GM12878 (cell line): ENCODE measurements at regions of chr6 and their contacts with region 1.

Region 1: GRCh38 chr6:8219352-8219943 is 117.1 kb upstream of the EEF1E1 start:
- DNase-seq: no peak
- ATAC-seq: peak; percentile 84
- H3K4me3 ChIP-seq: no peak overlapping the region
- H3K27ac ChIP-seq: no peak overlapping the region
- H3K4me1 ChIP-seq: no peaks in the 10 kb centered on the region
- H3K27me3 ChIP-seq: no peaks in the 10 kb centered on the region; a peak in 2 of 4 replicates
- CTCF ChIP-seq: peak; percentile 63 to 76 (median 70)
- EP300 ChIP-seq: no peak
- POLR2A ChIP-seq: no peak
- RAD21 ChIP-seq: peak; percentile 85

Region 2: GRCh38 chr6:8063761-8064637 is 155.4 kb before region 1 on chr6 and contains the start of gene BLOC1S5:
- CTCF ChIA-PET with region 1: interaction called, 20 read pairs
- POLR2A ChIA-PET with region 1: no interaction called
- RAD21 ChIA-PET with region 1: interaction called, 10 read pairs
- SMC1A ChIA-PET with region 1: interaction called, 14 read pairs
- in situ Hi-C with region 1: no loop called
- intact Hi-C with region 1: loop called (anchors 2 kb)
- DNase-seq: peak; percentile 85
- ATAC-seq: peak; percentile 96
- H3K4me3 ChIP-seq: peak within 1 kb of the TSS; percentile 84
- H3K27ac ChIP-seq: peak within 1 kb of the TSS; percentile 91
- H3K4me1 ChIP-seq: peaks cover 20% of the 10 kb centered on the region
- H3K27me3 ChIP-seq: no peaks in the 10 kb centered on the region
- CTCF ChIP-seq: peak in 1 of 3 experiments; percentile 6; a peak in 1 of 6 replicates
- EP300 ChIP-seq: no peak
- POLR2A ChIP-seq: peak; percentile 91
- RAD21 ChIP-seq: no peak
- polyA plus RNA-seq, gene BLOC1S5: 4.3 to 5.9 TPM

Region 3: DNA sequence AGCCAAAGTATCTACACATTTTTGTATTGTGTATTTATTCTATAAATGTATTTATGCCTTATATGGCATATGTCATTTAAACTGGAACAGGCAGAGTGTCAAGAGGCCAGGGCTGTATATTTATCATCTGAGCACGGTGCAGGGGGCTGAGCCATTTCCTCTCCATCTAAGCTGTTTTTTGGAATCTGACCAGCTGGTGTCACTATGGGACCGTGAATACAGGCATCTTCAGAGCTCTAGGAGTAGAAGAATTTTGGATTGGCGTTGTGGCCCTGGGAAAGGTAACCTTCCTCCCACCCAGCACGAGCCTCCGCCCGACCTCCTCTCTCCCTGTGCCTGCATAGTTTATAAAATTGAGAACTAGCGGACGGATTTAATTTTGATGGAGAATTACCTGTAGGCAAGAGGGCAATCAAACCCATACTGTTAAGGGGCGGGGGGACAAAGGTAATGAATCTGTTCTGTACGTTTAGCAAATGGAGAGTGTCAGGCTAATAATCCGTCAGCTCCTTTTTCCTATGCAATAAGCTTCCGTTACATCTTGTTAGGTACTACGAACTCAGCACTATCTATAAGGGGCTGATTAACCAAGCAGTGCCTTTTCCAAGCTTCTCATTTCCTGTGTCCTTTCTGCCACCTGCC is 88.1 kb before region 1 on chr6:
- CTCF ChIA-PET with region 1: interaction called, 335 read pairs
- POLR2A ChIA-PET with region 1: interaction called, 3 read pairs
- RAD21 ChIA-PET with region 1: interaction called, 203 read pairs
- SMC1A ChIA-PET with region 1: interaction called, 147 read pairs
- in situ Hi-C with region 1: loop called (anchors 5 kb)
- intact Hi-C with region 1: loop called (anchors 1 kb)
- DNase-seq: no peak
- ATAC-seq: peak; percentile 91
- H3K4me3 ChIP-seq: no peak overlapping the region
- H3K27ac ChIP-seq: no peak overlapping the region
- H3K4me1 ChIP-seq: no peaks in the 10 kb centered on the region
- H3K27me3 ChIP-seq: peaks cover 0 to 5% of the 10 kb centered on the region in 2 experiments; a peak in 2 of 4 replicates
- CTCF ChIP-seq: peak; percentile 35 to 76 (median 41); a peak in 4 of 6 replicates
- EP300 ChIP-seq: no peak
- POLR2A ChIP-seq: no peak
- RAD21 ChIP-seq: peak; percentile 79

Region 4: GRCh38 chr6:8172530-8172929 is 46.9 kb before region 1 on chr6:
- CTCF ChIA-PET with region 1: interaction called, 17 read pairs
- POLR2A ChIA-PET with region 1: no interaction called
- RAD21 ChIA-PET with region 1: interaction called, 13 read pairs
- SMC1A ChIA-PET with region 1: interaction called, 5 read pairs
- in situ Hi-C with region 1: no loop called
- intact Hi-C with region 1: no loop called
- DNase-seq: no peak
- ATAC-seq: no peak
- H3K4me3 ChIP-seq: no peak overlapping the region
- H3K27ac ChIP-seq: no peak overlapping the region
- H3K4me1 ChIP-seq: no peaks in the 10 kb centered on the region
- H3K27me3 ChIP-seq: no peaks in the 10 kb centered on the region
- CTCF ChIP-seq: no peak
- EP300 ChIP-seq: no peak
- POLR2A ChIP-seq: no peak
- RAD21 ChIP-seq: no peak

Region 5: DNA sequence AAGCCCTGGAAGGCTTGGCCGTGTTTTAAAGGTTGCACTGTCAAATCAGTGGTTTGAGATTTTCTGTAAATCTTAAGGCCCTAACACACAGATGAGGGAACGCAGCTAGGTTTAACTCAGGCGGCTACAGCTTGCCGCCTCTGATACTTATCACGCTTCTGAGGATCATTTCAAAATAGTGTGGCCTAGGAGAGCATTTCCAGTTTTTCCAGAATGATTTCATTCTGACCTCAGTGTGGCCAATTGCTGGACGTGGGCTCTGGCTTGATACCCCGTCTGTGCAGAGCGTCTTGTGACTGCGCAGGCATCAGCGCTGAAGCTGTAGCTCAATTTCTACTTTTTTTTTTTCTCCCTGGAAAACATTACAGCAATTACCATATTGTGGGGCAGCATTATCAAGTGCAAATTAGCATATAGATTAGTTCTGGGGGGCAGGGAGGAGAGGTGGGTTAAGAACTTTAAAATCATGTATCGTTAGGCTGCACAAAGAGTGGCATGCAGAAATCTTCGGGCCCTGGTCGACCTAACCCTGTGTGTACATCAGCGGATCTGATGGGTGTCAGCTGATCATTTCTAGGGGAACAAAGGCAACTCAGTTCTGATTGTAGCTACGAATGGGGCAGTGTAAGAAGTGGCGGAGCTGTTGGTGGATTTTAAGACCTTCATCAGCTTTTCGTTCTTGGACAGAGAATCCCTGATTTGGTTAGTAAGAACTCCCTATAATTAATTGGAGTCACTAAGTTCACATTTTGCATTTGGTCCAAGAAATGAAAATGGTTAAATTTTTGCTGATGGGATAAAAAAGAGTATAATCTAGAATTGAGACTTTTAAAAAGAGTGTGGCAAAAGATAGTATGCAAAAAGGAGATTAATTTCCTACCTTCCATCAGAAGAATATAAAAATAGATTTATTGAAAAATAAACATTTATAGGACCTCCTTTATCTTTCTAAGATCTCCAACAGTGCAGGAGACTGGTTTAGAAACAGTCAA is 12.0 kb before region 1 on chr6:
- CTCF ChIA-PET with region 1: interaction called, 16 read pairs
- POLR2A ChIA-PET with region 1: no interaction called
- RAD21 ChIA-PET with region 1: interaction called, 5 read pairs
- SMC1A ChIA-PET with region 1: interaction called, 5 read pairs
- in situ Hi-C with region 1: no loop called
- intact Hi-C with region 1: no loop called
- DNase-seq: no peak
- ATAC-seq: no peak
- H3K4me3 ChIP-seq: no peak overlapping the region
- H3K27ac ChIP-seq: no peak overlapping the region
- H3K4me1 ChIP-seq: no peaks in the 10 kb centered on the region
- H3K27me3 ChIP-seq: peaks cover 0 to 2% of the 10 kb centered on the region in 2 experiments; a peak in 1 of 4 replicates
- CTCF ChIP-seq: no peak
- EP300 ChIP-seq: no peak
- POLR2A ChIP-seq: no peak
- RAD21 ChIP-seq: no peak